ENCODE measurements at regions of chr10 and their contacts with region 1.

Region 1: GRCh38 chr10:45594276-45595106 is 78.1 kb downstream of the ZFAND4 start:
- DNase-seq: peak; percentile 93
- ATAC-seq: peak; percentile 99

Region 2: GRCh38 chr10:45470098-45471012 is 124.1 kb before region 1 on chr10:
- intact Hi-C with region 1: loop called in 1 of 2 experiments (anchors 5 kb)
- DNase-seq: no peak
- ATAC-seq: peak; percentile 53 to 61

Measured in left cardiac atrium (tissue), 4 donors.